ENCODE measurements at regions of chr2 and their contacts with region 1.

Region 1: GRCh38 chr2:230798769-230799399 is 65.9 kb upstream of the ITM2C start:
- DNase-seq: peak in 26 of 35 experiments; percentile 9 to 80 (median 37)
- ATAC-seq: peak in 3 of 4 experiments; percentile 31 to 49 (median 32)
- H3K4me3 ChIP-seq: no peak overlapping the region
- H3K4me3 Mint-ChIP-seq: no peak overlapping the region
- H3K27ac ChIP-seq: no peak overlapping the region
- H3K27ac Mint-ChIP-seq: peak overlapping the region; percentile 66 to 80
- H3K4me1 ChIP-seq: peaks cover 9 to 25% of the 10 kb centered on the region in 2 experiments
- H3K4me1 Mint-ChIP-seq: peaks cover 18 to 21% (median 18%) of the 10 kb centered on the region in 3 donors
- H3K27me3 ChIP-seq: no peaks in the 10 kb centered on the region
- H3K27me3 Mint-ChIP-seq: no peaks in the 10 kb centered on the region

Region 2: DNA sequence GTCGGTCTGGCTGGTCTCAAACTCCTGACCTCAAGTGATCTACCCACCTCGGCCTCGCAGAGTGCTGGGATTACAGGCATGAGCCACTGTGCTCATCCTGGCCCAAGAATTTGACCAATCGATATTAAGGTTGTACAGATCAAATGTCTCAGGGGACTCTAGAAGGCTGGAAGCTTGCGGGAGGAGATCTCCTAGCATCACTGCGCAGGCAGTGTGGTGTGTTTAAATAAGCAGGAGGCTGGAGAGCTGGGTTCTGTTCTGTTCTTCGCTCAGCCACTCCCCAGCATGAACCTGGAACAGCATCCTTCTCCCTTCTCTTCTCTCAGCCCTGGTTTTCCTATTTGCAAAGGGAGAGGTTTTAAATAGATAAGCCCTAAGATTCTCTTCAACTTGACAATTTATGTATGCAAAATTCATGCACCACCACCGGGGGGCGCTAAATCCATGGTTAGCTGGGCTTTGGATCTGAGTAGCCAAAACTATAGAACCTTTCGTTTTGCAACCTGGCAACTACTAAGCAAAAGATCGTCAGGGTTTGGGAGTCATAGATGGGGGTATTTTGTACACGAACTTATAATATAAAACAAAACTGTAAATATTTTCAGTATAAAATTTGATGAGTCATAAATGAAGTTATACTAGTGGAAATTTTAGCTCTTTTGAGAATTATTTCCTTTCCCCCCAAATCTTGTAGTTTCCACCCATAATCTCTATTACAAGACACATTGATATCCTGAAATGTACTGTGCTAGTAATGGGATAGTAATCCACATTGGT is 790.8 kb before region 1 on chr2:
- CTCF ChIA-PET with region 1: interaction called, 8 to 11 read pairs
- POLR2A ChIA-PET with region 1: no interaction called
- DNase-seq: peak; percentile 50 to 83 (median 74)
- ATAC-seq: peak; percentile 32 to 63 (median 56)
- H3K4me3 ChIP-seq: no peak overlapping the region
- H3K4me3 Mint-ChIP-seq: peak overlapping the region in 1 of 3 donors; percentile 7
- H3K27ac ChIP-seq: no peak overlapping the region
- H3K27ac Mint-ChIP-seq: no peak overlapping the region
- H3K4me1 ChIP-seq: no peaks in the 10 kb centered on the region
- H3K4me1 Mint-ChIP-seq: peaks cover 4 to 12% (median 5%) of the 10 kb centered on the region in 3 donors
- H3K27me3 ChIP-seq: peaks cover 0 to 2% of the 10 kb centered on the region in 2 experiments
- H3K27me3 Mint-ChIP-seq: no peaks in the 10 kb centered on the region

Region 3: DNA sequence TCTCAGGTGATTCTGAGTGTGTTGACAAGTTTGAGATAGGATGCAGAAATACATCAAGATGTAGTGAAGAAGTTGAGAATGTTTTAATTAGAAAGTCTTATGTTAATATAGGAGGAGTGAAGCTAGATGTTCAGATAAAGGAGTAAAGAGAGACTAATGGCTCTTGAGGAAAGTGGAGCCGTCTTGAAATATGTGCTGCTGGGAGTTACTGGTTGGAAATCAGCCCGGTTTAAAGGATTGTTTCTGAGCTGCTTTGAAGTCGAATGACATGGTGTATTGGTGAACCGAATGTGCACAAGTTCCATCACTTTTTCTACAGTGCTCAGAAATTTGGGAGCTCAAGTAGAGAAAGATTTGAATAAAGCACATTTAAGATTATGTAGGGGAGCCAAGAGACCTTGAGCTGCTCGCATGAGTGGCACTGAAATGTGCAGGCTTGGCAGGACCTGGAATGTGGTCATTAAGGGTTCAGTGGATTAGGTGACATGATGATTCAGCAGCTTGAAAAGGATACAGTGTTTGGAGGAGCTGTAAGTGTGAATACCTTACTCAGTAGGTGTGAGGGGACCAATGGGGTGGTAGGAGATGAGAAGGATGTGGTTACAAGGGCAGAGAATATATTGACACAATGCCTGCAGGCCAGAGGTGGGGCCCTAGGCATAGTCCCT is 17.6 kb before region 1 on chr2:
- CTCF ChIA-PET with region 1: interaction called, 4 to 15 read pairs
- POLR2A ChIA-PET with region 1: no interaction called
- DNase-seq: peak; percentile 7 to 71 (median 46)
- ATAC-seq: peak; percentile 89 to 99 (median 94)
- H3K4me3 ChIP-seq: no peak overlapping the region
- H3K4me3 Mint-ChIP-seq: peak overlapping the region in 2 of 3 donors; percentile 22 to 58
- H3K27ac ChIP-seq: peak overlapping the region; percentile 43
- H3K27ac Mint-ChIP-seq: peak overlapping the region; percentile 77 to 86
- H3K4me1 ChIP-seq: peaks cover 18 to 42% of the 10 kb centered on the region in 2 experiments
- H3K4me1 Mint-ChIP-seq: peaks cover 77 to 87% (median 83%) of the 10 kb centered on the region in 3 donors
- H3K27me3 ChIP-seq: no peaks in the 10 kb centered on the region
- H3K27me3 Mint-ChIP-seq: no peaks in the 10 kb centered on the region

Measured in T-cell (primary cell).